ENCODE measurements at regions of chr3 and their contacts with region 1.

Region 1: DNA sequence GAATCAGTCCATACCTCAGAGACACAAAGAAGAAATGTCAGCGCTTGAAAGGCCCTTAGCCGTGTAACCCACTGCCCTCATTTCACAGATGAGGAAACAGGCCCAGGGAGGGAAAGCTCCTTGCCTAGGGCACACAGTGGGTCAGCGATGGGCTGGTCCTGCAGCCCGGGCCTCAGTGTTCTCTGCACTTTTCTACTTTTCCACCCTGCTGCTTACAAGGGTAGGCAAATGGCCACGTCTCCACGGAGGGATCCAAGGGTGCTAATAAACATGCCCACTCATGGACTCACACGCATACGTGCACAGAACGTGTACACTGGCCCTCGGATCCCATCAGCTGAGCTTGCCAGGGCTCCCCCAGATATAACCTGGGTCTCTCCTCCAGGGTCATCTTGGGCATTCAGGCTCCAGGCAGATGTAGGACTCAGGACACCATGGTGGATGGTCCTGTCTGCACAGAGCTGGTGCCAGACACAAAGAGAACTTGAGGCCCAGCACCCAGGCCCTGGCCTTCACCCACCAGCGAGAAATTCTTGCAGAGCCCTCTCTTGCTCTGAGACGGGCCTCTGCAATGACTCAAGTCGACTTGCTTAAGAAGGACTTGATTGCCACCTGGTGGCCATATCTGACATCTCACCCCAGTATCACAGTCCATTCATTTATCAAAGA is 34.5 kb upstream of the VPS8 start:
- DNase-seq: peak; percentile 92
- H3K4me3 ChIP-seq: no peak overlapping the region
- CTCF ChIP-seq: peak; percentile 62

Region 2: DNA sequence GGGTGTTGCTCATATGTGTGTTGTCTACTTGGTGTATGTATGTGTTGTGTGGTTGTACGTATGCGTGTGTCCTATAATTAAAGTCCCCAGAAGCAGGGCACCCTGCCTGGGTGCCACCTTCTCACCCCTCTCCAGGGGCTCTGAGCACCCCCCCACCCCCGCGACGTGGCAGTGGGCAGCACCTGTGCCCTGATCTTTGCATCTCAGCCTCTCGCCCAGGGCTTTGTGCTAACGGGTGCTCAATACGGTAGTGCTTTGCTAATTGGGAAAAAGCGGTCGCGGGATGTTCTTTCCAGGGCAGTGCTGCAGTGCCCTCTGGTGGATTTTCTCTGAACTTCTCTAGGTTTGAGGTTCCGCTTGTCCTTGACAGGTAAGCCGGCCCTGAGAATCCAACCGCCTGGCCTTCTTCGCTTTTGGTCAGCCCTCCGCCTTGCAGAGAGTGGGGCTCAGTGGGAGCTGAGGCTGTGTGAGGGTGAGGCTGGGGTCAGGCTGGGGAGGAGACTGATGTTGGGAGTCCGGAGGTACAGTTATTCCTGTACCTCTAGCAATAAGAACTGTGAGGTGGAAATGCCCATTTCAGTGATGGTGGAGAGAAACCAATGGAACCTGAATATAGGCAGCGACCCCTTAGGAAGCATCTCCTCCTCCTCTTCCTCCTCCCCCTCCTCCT is 233.5 kb before region 1 on chr3:
- CTCF ChIA-PET with region 1: interaction called, 57 read pairs
- POLR2A ChIA-PET with region 1: no interaction called
- DNase-seq: no peak
- H3K4me3 ChIP-seq: no peak overlapping the region
- CTCF ChIP-seq: peak; percentile 71

Region 3: GRCh38 chr3:184561061-184561912 is 216.2 kb before region 1 on chr3 and contains the start of gene EPHB3:
- CTCF ChIA-PET with region 1: no interaction called
- POLR2A ChIA-PET with region 1: interaction called, 25 read pairs
- DNase-seq: peak; percentile 91
- H3K4me3 ChIP-seq: peak within 1 kb of the TSS; percentile 72
- CTCF ChIP-seq: peak; percentile 100

Region 4: DNA sequence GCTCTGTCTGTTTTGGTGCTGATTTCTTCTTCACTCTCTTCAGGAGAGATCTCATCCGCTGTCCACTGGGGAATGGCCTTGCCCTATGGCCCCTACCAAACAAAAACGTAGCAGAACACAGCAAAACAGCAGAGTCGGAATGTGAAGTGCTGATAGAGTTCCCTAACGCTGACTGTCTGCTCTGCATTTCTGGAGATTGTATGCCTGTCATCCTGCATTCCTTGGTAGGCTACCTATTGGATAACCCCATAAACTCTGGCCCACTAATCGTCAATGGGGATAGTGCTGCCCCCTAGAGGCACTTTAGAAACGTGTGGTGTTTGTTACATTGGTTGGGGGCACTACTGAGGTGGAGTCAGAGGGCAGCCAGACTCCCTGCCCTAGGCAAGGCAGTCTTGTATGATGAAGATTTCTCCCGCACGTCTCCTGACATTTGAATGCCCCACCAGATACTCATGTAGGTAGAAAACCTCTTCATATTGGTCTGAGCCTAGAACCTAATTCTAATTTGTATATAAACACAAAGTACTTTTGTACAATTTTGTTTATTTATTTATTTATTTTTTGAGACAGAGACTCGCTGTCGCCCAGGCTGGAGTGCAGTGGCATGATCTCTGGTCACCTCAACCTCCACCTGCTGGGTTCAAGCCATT is 50.0 kb before region 1 on chr3:
- CTCF ChIA-PET with region 1: interaction called, 29 read pairs
- POLR2A ChIA-PET with region 1: no interaction called
- DNase-seq: no peak
- H3K4me3 ChIP-seq: no peak overlapping the region
- CTCF ChIP-seq: peak; percentile 77

Region 5: DNA sequence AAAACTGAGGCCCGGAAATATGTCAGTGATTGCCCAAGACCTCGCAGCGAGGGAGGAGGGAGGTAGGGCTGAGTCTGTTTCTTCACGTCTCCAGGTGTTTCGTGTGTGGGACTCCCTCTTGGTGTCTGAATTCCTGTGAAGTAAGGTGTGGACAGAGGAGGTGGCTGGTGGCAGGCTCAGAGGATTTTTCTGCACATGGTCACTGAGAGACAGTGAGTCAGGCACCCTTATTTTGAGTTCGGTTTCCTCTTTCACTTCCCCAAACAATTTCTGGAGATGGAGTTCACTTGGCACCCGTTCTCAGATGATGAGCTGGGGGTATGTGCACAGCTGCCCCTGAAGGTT is 11.8 kb before region 1 on chr3:
- CTCF ChIA-PET with region 1: interaction called, 98 read pairs
- POLR2A ChIA-PET with region 1: no interaction called
- DNase-seq: no peak
- H3K4me3 ChIP-seq: no peak overlapping the region
- CTCF ChIP-seq: no peak

Region 6: GRCh38 chr3:184811999-184812661 is 34.7 kb after region 1 on chr3 and contains the start of gene VPS8:
- CTCF ChIA-PET with region 1: interaction called, 20 read pairs
- POLR2A ChIA-PET with region 1: no interaction called
- DNase-seq: peak; percentile 45
- H3K4me3 ChIP-seq: peak within 1 kb of the TSS; percentile 91
- CTCF ChIP-seq: peak; percentile 80

Region 7: DNA sequence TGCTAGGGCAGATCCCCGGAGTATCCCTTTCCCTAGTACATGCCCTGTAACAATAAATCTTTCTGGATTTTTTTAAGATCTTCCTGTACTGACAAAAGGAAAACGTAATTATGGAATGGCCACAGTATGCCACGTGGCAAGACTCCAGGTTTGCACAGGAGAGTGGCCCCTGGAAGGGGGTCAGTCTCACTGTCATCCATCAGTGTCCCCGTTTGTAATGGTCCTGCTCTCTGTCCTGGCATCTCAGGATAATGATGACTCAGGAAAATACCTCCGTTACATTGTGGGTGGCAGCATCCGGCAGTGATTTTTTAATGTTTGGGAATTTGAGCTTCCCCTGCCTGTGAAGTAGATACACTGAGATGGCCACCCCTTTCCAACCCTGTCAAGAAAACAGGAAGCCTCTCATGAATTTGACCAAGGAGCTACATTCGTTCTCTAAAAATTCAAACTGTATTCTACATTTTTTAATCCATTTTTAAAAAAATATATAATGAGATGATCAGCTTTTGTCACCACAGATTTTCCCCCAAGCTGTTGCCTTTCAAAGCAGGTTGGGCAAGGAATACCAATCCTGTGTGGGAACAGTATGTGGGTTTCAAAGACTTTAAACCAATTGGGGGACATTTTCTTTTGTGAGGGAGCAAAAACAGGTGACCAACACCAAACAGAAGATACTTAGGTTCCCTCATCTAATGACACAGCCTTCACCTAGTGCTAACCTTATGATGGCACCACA is 265.0 kb after region 1 on chr3:
- CTCF ChIA-PET with region 1: no interaction called
- POLR2A ChIA-PET with region 1: no interaction called
- DNase-seq: no peak
- H3K4me3 ChIP-seq: no peak overlapping the region
- CTCF ChIP-seq: no peak

Region 8: GRCh38 chr3:185065059-185065458 is 287.6 kb after region 1 on chr3:
- CTCF ChIA-PET with region 1: no interaction called
- POLR2A ChIA-PET with region 1: no interaction called
- DNase-seq: no peak
- H3K4me3 ChIP-seq: no peak overlapping the region
- CTCF ChIP-seq: no peak